Activated CD4-positive, alpha-beta memory T cell treated with anti-CD3 and anti-CD28 coated beads for 36 hours (primary cell): ENCODE measurements at regions of chr6 and their contacts with region 1.

Region 1: GRCh38 chr6:10528170-10528981 is 7.2 kb downstream of the GCNT2 start:
- DNase-seq: peak; percentile 37
- H3K4me3 Mint-ChIP-seq: peak overlapping the region; percentile 73
- H3K27ac Mint-ChIP-seq: peak overlapping the region; percentile 61
- H3K4me1 Mint-ChIP-seq: peaks cover 47% of the 10 kb centered on the region
- H3K27me3 Mint-ChIP-seq: no peaks in the 10 kb centered on the region

Region 2: DNA sequence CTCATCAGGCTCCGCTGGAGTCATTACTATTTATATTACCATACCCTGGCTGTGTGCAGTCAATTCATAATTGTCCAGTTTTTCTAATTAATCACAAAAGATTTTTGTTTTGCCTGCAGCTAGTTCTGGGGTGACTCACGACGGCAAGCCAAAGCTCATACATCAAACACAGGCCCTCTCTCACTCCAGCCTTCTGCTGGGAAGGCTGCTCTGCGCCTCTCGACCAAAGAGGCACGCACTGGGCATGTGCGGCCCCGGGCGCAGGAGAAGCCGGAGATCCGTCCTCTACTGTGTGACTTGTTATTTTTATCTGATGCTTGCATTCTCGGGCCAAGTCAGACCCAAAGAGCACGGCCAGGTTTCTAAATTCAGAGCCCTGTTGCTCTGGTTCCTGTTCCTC is 212.0 kb before region 1 on chr6:
- CTCF ChIA-PET with region 1: no interaction called
- POLR2A ChIA-PET with region 1: no interaction called
- intact Hi-C with region 1: no loop called
- DNase-seq: no peak
- H3K4me3 Mint-ChIP-seq: no peak overlapping the region
- H3K27ac Mint-ChIP-seq: no peak overlapping the region
- H3K4me1 Mint-ChIP-seq: no peaks in the 10 kb centered on the region
- H3K27me3 Mint-ChIP-seq: peaks cover 1% of the 10 kb centered on the region

Region 3: DNA sequence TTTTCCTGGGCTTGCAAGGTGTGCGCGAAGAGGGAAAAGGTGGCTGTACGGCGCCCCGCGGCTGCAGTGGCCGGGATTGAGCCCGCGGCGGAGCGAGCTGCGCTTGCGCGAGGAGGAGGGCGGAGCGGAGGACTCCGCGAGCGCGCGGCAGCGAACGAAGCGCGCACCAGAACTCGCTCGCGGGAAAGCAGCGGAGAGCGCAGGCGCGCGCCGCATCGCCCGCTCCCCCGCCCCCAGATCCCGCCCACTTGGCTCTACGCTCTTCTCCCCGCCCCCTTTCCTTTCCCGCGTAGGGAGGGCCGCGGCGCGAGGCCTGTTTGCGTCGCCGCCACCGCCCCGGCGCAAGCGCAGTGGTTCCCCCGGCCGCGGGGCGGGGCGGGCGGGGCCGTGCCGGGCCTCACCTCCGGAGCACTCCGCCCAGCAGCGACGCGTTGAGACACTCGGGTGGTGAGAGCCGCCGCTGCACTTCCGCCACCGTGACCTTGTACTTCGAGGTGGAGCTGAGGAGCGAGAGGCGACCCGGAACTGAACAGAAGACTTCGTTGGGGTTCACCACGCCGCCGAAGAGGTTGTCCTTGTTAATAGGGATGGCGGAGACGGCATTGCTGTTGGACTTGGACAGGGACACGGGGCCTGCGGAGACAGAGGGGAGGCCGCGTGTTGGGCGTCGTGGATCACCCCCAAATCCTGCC is 124.1 kb before region 1 on chr6:
- CTCF ChIA-PET with region 1: no interaction called
- POLR2A ChIA-PET with region 1: no interaction called
- intact Hi-C with region 1: no loop called
- DNase-seq: peak; percentile 93
- H3K4me3 Mint-ChIP-seq: peak overlapping the region; percentile 76
- H3K27ac Mint-ChIP-seq: peak overlapping the region; percentile 77
- H3K4me1 Mint-ChIP-seq: peaks cover 10% of the 10 kb centered on the region
- H3K27me3 Mint-ChIP-seq: peaks cover 50% of the 10 kb centered on the region

Region 4: GRCh38 chr6:10510592-10511367 is 17.6 kb before region 1 on chr6:
- CTCF ChIA-PET with region 1: no interaction called
- POLR2A ChIA-PET with region 1: no interaction called
- intact Hi-C with region 1: loop called (anchors 2 kb)
- DNase-seq: peak; percentile 62
- H3K4me3 Mint-ChIP-seq: no peak overlapping the region
- H3K27ac Mint-ChIP-seq: no peak overlapping the region
- H3K4me1 Mint-ChIP-seq: peaks cover 4% of the 10 kb centered on the region
- H3K27me3 Mint-ChIP-seq: peaks cover 6% of the 10 kb centered on the region

Region 5: DNA sequence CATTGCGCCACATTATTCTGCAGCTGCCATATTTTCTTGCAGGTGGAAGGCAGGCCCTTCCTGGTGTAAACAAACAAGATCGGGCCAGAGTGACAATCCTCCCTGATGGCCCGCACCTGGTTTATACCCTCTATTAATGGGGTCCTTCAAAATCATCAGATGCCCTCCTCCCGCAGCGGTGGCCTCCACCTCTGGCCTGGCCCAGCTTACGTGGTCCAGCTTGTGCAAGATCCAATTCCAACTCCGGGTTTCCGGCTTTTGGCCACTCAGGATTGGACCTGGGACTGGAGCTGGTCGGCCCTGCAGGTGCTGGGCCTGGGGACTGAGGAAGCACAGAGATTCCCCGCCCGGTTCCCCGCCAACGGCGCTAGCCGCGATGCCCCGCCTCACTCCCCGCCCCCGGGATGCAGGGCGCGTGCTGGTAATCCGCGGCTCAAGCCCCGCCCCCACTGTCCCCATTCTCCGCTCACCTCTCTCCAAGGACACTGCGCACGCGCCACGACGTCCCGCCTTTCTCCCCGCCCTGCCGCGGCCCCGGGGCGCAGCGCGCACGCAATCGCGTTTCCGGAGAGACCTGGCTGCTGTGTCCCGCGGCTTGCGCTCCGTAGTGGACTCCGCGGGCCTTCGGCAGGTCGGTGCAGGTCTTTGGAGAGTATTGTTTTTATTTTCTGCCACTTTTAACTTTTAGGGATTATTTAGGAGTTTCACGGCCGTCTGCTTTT is 219.0 kb after region 1 on chr6 and contains the start of gene TMEM14B:
- CTCF ChIA-PET with region 1: no interaction called
- POLR2A ChIA-PET with region 1: no interaction called
- intact Hi-C with region 1: loop called (anchors 2 kb)
- DNase-seq: peak; percentile 100
- H3K4me3 Mint-ChIP-seq: peak within 1 kb of the TSS; percentile 88
- H3K27ac Mint-ChIP-seq: peak within 1 kb of the TSS; percentile 86
- H3K4me1 Mint-ChIP-seq: peaks cover 47% of the 10 kb centered on the region
- H3K27me3 Mint-ChIP-seq: no peaks in the 10 kb centered on the region
- total RNA-seq, gene TMEM14B: 86.9 to 91.3 TPM